H1 (cell line): ENCODE measurements at regions of chr2 and their contacts with region 1.

Region 1: GRCh38 chr2:120680136-120680761 is 55.4 kb upstream of the GLI2 start:
- DNase-seq: peak in 1 of 2 experiments; percentile 91
- H3K4me3 ChIP-seq: no peak overlapping the region
- H3K27ac ChIP-seq: no peak overlapping the region
- H3K4me1 ChIP-seq: no peaks in the 10 kb centered on the region
- H3K27me3 ChIP-seq: peaks cover 0 to 14% (median 6%) of the 10 kb centered on the region in 4 experiments; a peak in 3 of 7 replicates
- CTCF ChIP-seq: peak; percentile 78 to 79 (median 78)
- EP300 ChIP-seq: no peak
- POLR2A ChIP-seq: no peak
- RAD21 ChIP-seq: peak; percentile 86 to 91

Region 2: GRCh38 chr2:120343433-120344105 is 336.7 kb before region 1 on chr2:
- CTCF ChIA-PET with region 1: interaction called, 11 read pairs
- POLR2A ChIA-PET with region 1: no interaction called
- DNase-seq: peak; percentile 71 to 89
- H3K4me3 ChIP-seq: peak overlapping the region in 3 of 4 experiments; percentile 9 to 57 (median 11); a peak in 3 of 8 replicates
- H3K27ac ChIP-seq: no peak overlapping the region
- H3K4me1 ChIP-seq: peaks cover 5 to 28% (median 13%) of the 10 kb centered on the region in 4 experiments
- H3K27me3 ChIP-seq: peaks cover 45 to 76% (median 67%) of the 10 kb centered on the region in 4 experiments
- CTCF ChIP-seq: peak in 2 of 3 experiments; percentile 91 to 97; a peak in 3 of 4 replicates
- EP300 ChIP-seq: 0 out of 3 replicates have a peak, but pooled peaks of 1 of the 2 experiments have one; percentile 27
- POLR2A ChIP-seq: no peak
- RAD21 ChIP-seq: peak; percentile 98 to 99

Region 3: DNA sequence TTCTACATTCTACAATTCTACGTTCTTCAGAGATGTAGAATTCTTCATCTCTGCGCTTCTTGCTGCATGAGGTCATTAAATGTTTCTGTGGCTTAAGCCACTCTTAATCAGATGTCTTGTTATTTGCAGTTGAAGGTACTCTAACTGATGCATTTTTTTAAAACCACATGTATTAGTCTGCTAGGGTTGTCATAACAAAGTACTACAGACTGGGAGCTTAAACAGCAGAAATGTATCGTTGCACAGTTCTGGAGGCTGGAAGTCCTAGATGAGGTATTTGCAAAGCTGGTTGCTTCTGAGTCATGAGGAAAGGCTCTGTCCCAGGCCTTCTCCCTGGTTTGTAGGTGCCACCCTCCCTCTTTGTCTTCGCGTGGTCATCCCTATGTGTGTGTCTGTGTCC is 120.8 kb before region 1 on chr2:
- CTCF ChIA-PET with region 1: interaction called, 14 read pairs
- POLR2A ChIA-PET with region 1: no interaction called
- DNase-seq: no peak
- H3K4me3 ChIP-seq: no peak overlapping the region
- H3K27ac ChIP-seq: no peak overlapping the region
- H3K4me1 ChIP-seq: no peaks in the 10 kb centered on the region
- H3K27me3 ChIP-seq: peaks cover 0 to 7% (median 6%) of the 10 kb centered on the region in 4 experiments; a peak in 3 of 7 replicates
- CTCF ChIP-seq: no peak
- EP300 ChIP-seq: no peak
- POLR2A ChIP-seq: no peak
- RAD21 ChIP-seq: no peak

Region 4: DNA sequence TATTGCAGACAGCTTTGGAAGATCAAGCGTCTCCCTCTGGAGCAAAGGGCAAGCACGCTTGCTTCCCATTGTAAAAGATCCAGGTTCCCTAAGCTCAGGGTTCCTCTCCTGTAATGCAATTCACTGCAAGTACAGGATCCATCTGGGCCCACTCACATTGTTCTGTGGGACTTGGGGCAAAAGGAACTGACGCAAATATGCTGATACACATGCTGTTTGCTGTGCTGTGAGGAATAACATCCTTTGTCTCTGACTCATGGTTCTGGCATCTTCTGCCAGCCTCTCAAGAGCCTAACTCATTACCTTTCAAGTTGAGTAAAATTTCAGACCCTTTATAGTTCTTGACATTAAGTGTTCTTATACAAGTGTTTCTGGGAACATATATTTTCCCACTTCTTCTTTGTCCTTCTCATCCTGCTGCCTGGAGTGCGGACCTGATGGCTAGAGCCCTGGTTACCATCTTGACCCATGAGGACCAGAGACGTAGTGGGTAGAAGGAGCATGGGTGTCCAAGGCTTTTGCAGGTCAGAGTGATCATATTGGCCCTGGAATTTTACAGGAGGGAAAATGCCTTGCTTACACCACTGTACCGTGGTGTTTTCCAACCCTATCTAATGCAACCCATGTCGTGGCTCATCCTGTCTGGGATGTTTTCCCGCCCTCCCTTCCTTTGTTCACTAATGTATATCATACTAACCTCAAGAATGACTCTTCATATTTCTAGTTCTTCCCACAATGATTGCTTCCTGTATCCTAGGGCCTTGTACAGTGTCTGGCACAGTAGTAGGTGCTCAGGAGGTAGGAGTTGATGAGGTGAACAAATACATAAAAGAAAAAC is 90.3 kb before region 1 on chr2:
- CTCF ChIA-PET with region 1: interaction called, 23 read pairs
- POLR2A ChIA-PET with region 1: no interaction called
- DNase-seq: no peak
- H3K4me3 ChIP-seq: no peak overlapping the region
- H3K27ac ChIP-seq: no peak overlapping the region
- H3K4me1 ChIP-seq: peaks cover 6 to 35% (median 24%) of the 10 kb centered on the region in 4 experiments
- H3K27me3 ChIP-seq: peaks cover 7 to 56% (median 53%) of the 10 kb centered on the region in 4 experiments
- CTCF ChIP-seq: no peak
- EP300 ChIP-seq: no peak
- POLR2A ChIP-seq: no peak
- RAD21 ChIP-seq: no peak

Region 5: DNA sequence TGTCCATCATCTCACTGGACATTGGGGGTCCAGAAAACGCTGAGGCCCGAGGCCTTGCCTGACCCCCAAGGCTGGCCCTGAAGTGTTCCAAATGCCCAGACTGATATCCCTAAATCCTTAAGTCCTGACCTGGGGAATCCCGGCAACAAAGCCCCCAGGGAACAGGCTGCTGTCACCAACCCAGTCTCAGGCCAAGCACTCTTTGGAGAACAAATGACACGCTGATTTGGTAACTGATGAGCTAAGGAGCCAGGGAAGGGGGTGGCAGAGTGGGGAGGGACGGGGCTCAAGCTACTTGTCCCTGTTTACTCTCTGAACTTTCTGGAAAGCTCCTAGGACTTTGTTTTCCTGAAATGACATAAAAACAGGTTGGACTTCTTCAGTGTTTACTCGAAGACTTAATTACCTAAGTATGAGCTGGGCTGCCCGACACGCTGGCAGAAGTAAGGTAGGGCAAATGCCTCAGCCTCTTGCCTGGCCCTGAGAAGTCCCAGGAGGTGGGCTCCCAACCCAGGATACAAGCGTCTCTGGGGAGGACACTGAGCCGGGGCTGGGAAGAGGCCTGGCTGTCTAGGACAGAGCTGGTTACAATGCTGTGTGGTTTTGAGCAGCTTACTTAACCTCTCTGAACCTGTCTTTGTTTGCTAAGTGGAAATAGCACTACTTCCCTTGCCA is 50.1 kb before region 1 on chr2:
- CTCF ChIA-PET with region 1: interaction called, 13 read pairs
- POLR2A ChIA-PET with region 1: no interaction called
- DNase-seq: no peak
- H3K4me3 ChIP-seq: no peak overlapping the region
- H3K27ac ChIP-seq: no peak overlapping the region
- H3K4me1 ChIP-seq: peaks cover 0 to 4% (median 0%) of the 10 kb centered on the region in 4 experiments; a peak in 1 of 7 replicates
- H3K27me3 ChIP-seq: peaks cover 0 to 12% (median 4%) of the 10 kb centered on the region in 4 experiments; a peak in 4 of 7 replicates
- CTCF ChIP-seq: no peak
- EP300 ChIP-seq: no peak
- POLR2A ChIP-seq: no peak
- RAD21 ChIP-seq: no peak